ENCODE measurements at regions of chr9 and their contacts with region 1.

Region 1: DNA sequence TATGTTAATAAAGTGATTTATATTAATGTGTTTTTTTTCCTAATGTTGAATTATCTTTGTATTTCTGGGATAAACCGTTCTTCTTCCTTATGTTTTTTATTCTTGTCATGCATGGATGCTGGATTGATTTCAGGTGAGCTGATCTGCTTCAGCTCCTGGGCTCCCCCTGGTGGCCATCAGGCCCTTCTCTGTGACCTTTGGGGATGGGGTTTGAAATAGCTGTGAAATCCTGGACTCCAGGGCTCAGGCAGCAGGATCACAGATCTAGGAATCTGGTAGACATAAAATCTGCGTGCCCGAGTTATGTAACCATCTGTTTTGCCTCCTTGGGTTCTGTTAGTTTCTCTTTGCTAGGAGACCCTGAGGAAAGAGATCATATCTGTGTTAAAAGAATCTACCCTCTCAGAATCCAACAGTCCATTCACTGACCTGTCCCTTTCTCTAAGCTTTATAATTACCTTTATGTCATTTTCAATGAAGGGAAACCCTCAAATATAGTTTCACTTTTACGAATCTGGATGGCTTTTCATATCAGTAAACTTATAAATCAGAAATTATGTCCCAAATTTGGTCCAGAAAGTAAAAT is 12.2 kb upstream of the OR13J1 start:
- DNase-seq: peak; percentile 39
- H3K4me3 ChIP-seq: no peak overlapping the region
- H3K27ac ChIP-seq: no peak overlapping the region
- H3K27me3 ChIP-seq: peaks cover 4% of the 10 kb centered on the region
- CTCF ChIP-seq: peak; percentile 99

Region 2: DNA sequence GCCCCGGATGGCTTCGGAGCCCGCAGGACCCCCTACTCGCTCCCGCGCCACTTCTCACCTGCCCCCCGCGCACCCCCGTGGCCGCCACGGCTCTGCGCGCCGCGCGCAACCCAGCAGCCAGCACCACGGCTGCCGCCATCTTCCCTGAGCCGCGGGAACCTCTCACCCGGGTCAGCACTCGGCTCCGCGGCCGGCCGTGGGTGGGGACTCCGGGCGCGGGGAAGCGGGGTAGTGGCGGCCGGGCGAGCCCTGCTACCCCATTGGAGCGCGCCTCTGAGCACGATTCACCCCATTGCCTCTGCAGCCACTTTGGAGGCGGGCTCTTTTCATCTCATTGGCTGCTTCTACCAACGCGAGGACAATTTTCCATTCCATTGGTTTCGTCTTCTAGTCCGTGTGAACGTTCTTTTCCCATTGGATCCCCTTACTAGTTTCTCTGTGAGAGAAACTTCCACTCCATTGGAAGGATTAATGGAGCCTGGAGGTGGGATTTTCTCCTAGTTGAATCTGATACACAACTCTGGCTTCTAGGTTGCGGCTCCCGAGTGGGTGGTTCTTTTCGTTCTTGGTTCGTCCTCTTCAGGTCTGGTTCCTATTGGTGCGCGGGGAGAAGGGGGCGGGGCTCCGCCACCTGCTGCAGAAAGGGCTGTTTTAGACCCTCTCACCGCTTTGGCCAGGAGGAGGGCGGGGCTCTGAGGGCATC is 67.4 kb before region 1 on chr9 and contains the start of gene HINT2:
- CTCF ChIA-PET with region 1: interaction called, 21 read pairs
- POLR2A ChIA-PET with region 1: no interaction called
- DNase-seq: peak; percentile 97
- H3K4me3 ChIP-seq: peak within 1 kb of the TSS; percentile 87
- H3K27ac ChIP-seq: peak within 1 kb of the TSS; percentile 70
- H3K27me3 ChIP-seq: peaks cover 6% of the 10 kb centered on the region
- CTCF ChIP-seq: no peak
- polyA plus RNA-seq, gene HINT2: 17.5 and 18.5 TPM in 2 replicates

Region 3: GRCh38 chr9:35844716-35845270 is 37.6 kb before region 1 on chr9:
- CTCF ChIA-PET with region 1: interaction called, 15 read pairs
- POLR2A ChIA-PET with region 1: no interaction called
- DNase-seq: peak; percentile 77
- H3K4me3 ChIP-seq: no peak overlapping the region
- H3K27ac ChIP-seq: peak overlapping the region; percentile 75
- H3K27me3 ChIP-seq: no peaks in the 10 kb centered on the region
- CTCF ChIP-seq: no peak

Region 4: GRCh38 chr9:35871497-35871896 is 10.9 kb before region 1 on chr9:
- CTCF ChIA-PET with region 1: interaction called, 15 read pairs
- POLR2A ChIA-PET with region 1: no interaction called
- DNase-seq: no peak
- H3K4me3 ChIP-seq: no peak overlapping the region
- H3K27ac ChIP-seq: no peak overlapping the region
- H3K27me3 ChIP-seq: peaks cover 3% of the 10 kb centered on the region
- CTCF ChIP-seq: no peak

Measured in AG04450 (cell line).